Activated CD8-positive, alpha-beta T cell treated with anti-CD3 and anti-CD28 coated beads, Interleukin-2, amount 10 ng/mL, durations not matched to agents 7 days and 5 days (primary cell): ENCODE measurements at regions of chr4 and their contacts with region 1.

Region 1: DNA sequence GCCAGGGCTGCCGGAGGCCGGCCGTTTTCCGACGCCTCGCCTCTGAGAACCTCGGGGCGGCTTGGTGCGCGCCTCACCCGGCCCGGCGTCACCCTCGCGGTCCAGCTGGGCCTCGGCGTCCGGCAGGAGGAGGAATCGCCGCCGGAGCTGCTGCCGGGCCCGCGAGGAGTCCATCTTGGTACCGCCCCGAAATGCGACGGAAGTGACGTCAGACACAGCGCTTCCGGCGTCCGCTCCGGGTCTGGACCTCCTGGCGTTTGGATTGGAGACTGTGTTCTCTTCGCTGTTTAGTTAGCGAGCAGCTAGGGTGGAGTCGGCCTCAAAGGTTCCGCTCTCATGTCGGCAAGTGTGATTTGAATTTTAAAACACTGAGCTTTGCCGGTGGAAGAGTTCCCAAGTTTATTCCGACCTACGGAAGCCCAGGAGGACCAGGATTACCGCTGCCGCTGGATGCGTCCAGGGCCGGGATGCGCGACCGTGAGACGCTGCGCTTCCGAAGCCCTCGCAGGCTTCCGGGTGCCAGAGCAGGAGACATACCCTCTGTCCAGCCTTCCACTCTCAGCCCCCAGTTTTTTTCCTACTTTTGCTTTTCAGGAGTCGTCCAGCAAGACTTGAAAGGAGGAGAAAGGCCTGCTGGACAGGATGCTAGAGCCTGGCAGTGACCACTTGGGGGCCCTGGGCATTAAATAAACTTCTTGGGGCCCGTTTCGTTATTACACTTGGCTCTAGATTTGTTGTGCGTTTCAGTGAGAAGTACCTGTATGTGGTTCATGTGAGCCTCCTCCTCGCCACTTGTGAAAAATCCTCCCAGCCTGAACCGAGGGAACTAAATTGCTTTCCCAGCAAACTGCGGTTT is at the start of gene TMEM128:
- DNase-seq: peak; percentile 94
- ATAC-seq: peak; percentile 97
- H3K4me3 Mint-ChIP-seq: peak within 1 kb of the TSS; percentile 95
- H3K27ac Mint-ChIP-seq: peak within 1 kb of the TSS; percentile 98
- H3K4me1 Mint-ChIP-seq: peaks cover 29% of the 10 kb centered on the region
- H3K27me3 Mint-ChIP-seq: no peaks in the 10 kb centered on the region
- total RNA-seq, gene TMEM128: 14.0 to 15.9 TPM

Region 2: DNA sequence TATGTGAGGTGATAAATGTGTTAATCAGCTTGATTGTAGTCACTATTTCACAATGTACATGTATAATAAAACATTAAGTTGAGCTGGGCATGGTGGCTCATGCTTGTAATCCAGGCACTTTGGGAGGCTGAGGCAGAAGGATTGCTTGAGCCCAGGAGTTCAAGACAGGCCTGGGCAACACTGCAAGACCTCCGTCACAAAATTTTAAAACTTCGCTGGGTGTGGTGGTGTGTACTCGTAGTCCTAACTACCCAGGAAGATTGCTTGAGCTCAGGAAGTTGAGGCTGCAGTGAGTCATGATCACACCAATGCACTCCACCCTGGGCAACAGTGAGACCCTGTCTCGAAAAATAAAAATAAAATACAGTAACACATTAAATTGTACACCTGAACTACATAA is 21.6 kb after region 1 on chr4:
- CTCF ChIA-PET with region 1: interaction called, 3 read pairs
- POLR2A ChIA-PET with region 1: interaction called, 10 read pairs
- DNase-seq: peak; percentile 42
- ATAC-seq: peak; percentile 78
- H3K4me3 Mint-ChIP-seq: peak overlapping the region; percentile 63
- H3K27ac Mint-ChIP-seq: peak overlapping the region; percentile 88
- H3K4me1 Mint-ChIP-seq: peaks cover 26% of the 10 kb centered on the region
- H3K27me3 Mint-ChIP-seq: no peaks in the 10 kb centered on the region

Region 3: GRCh38 chr4:4334798-4335520 is 86.7 kb after region 1 on chr4:
- CTCF ChIA-PET with region 1: interaction called, 27 read pairs
- POLR2A ChIA-PET with region 1: interaction called, 5 read pairs
- DNase-seq: peak; percentile 83
- ATAC-seq: peak; percentile 95
- H3K4me3 Mint-ChIP-seq: no peak overlapping the region
- H3K27ac Mint-ChIP-seq: no peak overlapping the region
- H3K4me1 Mint-ChIP-seq: peaks cover 8% of the 10 kb centered on the region
- H3K27me3 Mint-ChIP-seq: peaks cover 3% of the 10 kb centered on the region

Region 4: DNA sequence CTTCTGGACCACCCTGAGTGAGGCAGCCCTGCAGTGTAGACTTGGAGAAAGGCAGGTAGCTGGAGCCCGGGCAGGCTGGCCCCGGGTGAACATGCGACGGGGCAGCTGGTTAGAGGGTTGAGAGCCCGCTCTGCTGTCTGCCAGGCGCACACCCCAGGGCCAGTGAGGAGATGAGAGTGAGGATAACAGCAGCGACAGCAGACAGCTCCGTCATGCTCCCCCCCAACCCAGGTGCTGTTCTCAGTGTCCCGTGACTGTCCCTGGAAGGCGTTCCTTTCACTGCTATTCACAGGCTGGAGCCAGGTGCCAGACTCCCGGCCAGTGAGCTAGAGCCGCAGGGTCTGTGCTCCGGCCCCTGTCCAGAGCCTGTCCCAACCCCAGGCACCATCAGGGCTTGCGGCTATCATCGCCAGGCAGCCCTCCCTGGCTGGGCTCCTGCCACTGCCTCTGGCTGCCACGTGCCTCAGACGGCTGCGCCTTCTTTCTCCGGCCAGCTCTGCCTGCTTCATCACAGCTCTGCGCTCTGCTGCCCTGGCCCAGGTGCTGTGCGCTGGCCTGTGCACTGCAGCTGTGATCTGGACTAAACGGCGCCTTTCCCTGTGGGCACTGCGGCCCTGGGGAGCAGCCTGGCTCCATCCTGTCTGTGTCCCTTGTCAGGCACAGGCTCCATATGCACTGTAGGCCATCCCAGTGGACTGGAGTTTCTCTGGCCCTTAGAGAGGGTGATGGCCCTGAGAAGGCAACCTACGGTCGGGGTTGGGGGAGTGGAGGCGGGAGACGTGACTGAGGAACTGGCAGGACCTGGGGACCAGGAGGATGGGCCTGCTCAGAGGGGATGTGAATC is 158.4 kb after region 1 on chr4:
- CTCF ChIA-PET with region 1: no interaction called
- POLR2A ChIA-PET with region 1: no interaction called
- DNase-seq: no peak
- ATAC-seq: no peak
- H3K4me3 Mint-ChIP-seq: no peak overlapping the region
- H3K27ac Mint-ChIP-seq: no peak overlapping the region
- H3K4me1 Mint-ChIP-seq: no peaks in the 10 kb centered on the region
- H3K27me3 Mint-ChIP-seq: no peaks in the 10 kb centered on the region